Naive thymus-derived CD4-positive, alpha-beta T cell (primary cell): ENCODE measurements at regions of chr1 and their contacts with region 1.

Region 1: GRCh38 chr1:110829955-110830553 is 42.9 kb upstream of the CD53 start:
- DNase-seq: peak in 7 of 9 donors; percentile 20 to 61 (median 54)
- ATAC-seq: peak; percentile 93
- H3K4me3 ChIP-seq: no peak overlapping the region
- H3K4me3 Mint-ChIP-seq: no peak overlapping the region
- H3K27ac ChIP-seq: no peak overlapping the region
- H3K27ac Mint-ChIP-seq: peak overlapping the region in 1 of 9 donors; percentile 14
- H3K4me1 ChIP-seq: no peaks in the 10 kb centered on the region
- H3K4me1 Mint-ChIP-seq: peaks cover 6 to 33% (median 13%) of the 10 kb centered on the region in 7 donors
- H3K27me3 ChIP-seq: no peaks in the 10 kb centered on the region
- H3K27me3 Mint-ChIP-seq: peaks cover 0 to 49% (median 2%) of the 10 kb centered on the region in 5 donors

Region 2: GRCh38 chr1:110787328-110788071 is 42.6 kb before region 1 on chr1:
- CTCF ChIA-PET with region 1: interaction called, 37 read pairs
- POLR2A ChIA-PET with region 1: interaction called, 3 read pairs
- intact Hi-C with region 1: loop called (anchors 1 kb)
- DNase-seq: peak in 7 of 9 donors; percentile 25 to 78 (median 61)
- ATAC-seq: peak; percentile 78
- H3K4me3 ChIP-seq: peak overlapping the region; percentile 40
- H3K4me3 Mint-ChIP-seq: peak overlapping the region; percentile 72 to 88 (median 80)
- H3K27ac ChIP-seq: peak overlapping the region; percentile 55
- H3K27ac Mint-ChIP-seq: peak overlapping the region; percentile 72 to 95 (median 87)
- H3K4me1 ChIP-seq: peaks cover 49 to 56% of the 10 kb centered on the region in 2 donors
- H3K4me1 Mint-ChIP-seq: peaks cover 43 to 78% (median 70%) of the 10 kb centered on the region in 7 donors
- H3K27me3 ChIP-seq: no peaks in the 10 kb centered on the region
- H3K27me3 Mint-ChIP-seq: peaks cover 0 to 14% (median 0%) of the 10 kb centered on the region in 5 donors

Region 3: DNA sequence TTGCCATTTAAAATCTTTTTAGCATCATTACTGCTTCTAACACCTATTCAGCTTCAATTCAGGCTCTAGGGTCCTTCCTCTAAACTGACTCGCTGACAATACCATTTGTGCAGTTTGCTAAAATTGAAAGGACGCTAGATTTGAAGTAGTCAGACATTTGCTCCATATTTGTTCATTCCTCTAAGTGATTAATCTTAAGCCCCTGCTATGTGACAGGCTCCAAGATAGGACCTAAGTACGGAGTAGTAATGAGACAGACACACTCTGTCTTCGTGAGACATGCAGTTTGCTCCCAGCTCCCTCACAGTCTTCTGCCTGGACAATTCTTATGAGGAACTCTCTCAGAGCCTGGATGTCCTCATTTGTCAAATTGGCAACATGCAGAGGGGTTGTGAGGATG is 16.8 kb after region 1 on chr1:
- CTCF ChIA-PET with region 1: interaction called, 3 read pairs
- POLR2A ChIA-PET with region 1: no interaction called
- intact Hi-C with region 1: loop called in 1 of 2 experiments (anchors 1 kb)
- DNase-seq: no peak
- ATAC-seq: no peak
- H3K4me3 ChIP-seq: no peak overlapping the region
- H3K4me3 Mint-ChIP-seq: no peak overlapping the region
- H3K27ac ChIP-seq: no peak overlapping the region
- H3K27ac Mint-ChIP-seq: peak overlapping the region in 1 of 9 donors; percentile 27
- H3K4me1 ChIP-seq: no peaks in the 10 kb centered on the region
- H3K4me1 Mint-ChIP-seq: peaks cover 0 to 10% (median 0%) of the 10 kb centered on the region in 7 donors
- H3K27me3 ChIP-seq: no peaks in the 10 kb centered on the region
- H3K27me3 Mint-ChIP-seq: peaks cover 0 to 28% (median 0%) of the 10 kb centered on the region in 5 donors